PC-9 (cell line): ENCODE measurements at regions of chrX and their contacts with region 1.

Region 1: DNA sequence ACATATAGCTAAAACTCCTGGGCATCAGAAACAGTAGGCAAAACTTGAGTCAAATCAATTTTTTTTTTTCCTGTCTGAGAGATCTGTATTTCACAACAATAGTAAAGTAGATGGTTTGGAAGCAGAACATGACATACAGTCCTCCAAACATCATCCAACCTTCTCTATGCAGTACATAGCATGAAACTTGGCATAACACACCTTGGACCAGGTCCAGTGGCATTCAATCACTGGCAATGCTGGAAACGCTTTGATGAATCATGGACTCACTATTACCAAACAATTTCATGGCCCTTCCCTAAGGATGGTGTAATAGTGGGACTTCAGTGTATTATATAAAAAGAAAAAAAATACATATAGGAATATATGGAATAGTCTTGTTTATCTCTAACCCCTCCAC is 154.6 kb downstream of the FMR1NB start:
- DNase-seq: no peak
- H3K4me3 ChIP-seq: no peak overlapping the region
- H3K27ac ChIP-seq: no peak overlapping the region
- H3K4me1 ChIP-seq: no peaks in the 10 kb centered on the region
- H3K27me3 ChIP-seq: no peaks in the 10 kb centered on the region
- CTCF ChIP-seq: no peak

Region 2: GRCh38 chrX:149286940-149287349 is 1151.2 kb after region 1 on chrX:
- CTCF ChIA-PET with region 1: no interaction called
- POLR2A ChIA-PET with region 1: no interaction called
- intact Hi-C with region 1: loop called (anchors 5 kb)
- DNase-seq: peak in 1 of 2 experiments; percentile 39
- H3K4me3 ChIP-seq: no peak overlapping the region
- H3K27ac ChIP-seq: no peak overlapping the region
- H3K4me1 ChIP-seq: no peaks in the 10 kb centered on the region
- H3K27me3 ChIP-seq: no peaks in the 10 kb centered on the region
- CTCF ChIP-seq: peak; percentile 92

Region 3: GRCh38 chrX:149461746-149462145 is 1326.0 kb after region 1 on chrX:
- CTCF ChIA-PET with region 1: no interaction called
- POLR2A ChIA-PET with region 1: interaction called, 11 read pairs
- intact Hi-C with region 1: no loop called
- DNase-seq: peak in 1 of 2 experiments; percentile 18
- H3K4me3 ChIP-seq: no peak overlapping the region
- H3K27ac ChIP-seq: no peak overlapping the region
- H3K4me1 ChIP-seq: no peaks in the 10 kb centered on the region
- H3K27me3 ChIP-seq: peaks cover 39% of the 10 kb centered on the region
- CTCF ChIP-seq: no peak